Breast epithelium (tissue), 4 donors: ENCODE measurements at regions of chr3 and their contacts with region 1.

Region 1: DNA sequence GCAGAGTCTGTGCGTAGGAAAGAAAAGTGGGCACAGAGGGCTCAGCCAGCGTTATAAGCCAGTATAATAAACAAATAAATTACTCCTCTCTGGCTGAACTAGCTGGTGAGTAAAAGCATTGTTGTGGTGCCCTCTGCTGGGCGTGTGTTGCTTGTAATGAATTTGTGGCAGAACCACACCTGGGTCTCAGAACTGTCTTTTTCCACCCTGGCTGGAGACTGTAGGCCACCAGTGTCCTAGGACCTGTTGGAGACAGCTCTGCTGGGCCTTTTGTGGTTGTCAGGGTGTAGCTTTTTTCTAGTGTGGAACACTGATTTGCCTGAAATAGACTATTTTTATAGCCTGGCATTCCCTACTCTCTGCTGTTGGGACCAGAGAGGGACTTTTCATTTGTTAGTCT is 130.5 kb upstream of the EIF1B start:
- DNase-seq: peak; percentile 51 to 81
- H3K4me3 ChIP-seq: no peak overlapping the region
- H3K27ac ChIP-seq: no peak overlapping the region
- H3K4me1 ChIP-seq: no peaks in the 10 kb centered on the region
- H3K27me3 ChIP-seq: no peaks in the 10 kb centered on the region
- CTCF ChIP-seq: peak; percentile 28 to 74 (median 57)
- POLR2A ChIP-seq: no peak

Region 2: DNA sequence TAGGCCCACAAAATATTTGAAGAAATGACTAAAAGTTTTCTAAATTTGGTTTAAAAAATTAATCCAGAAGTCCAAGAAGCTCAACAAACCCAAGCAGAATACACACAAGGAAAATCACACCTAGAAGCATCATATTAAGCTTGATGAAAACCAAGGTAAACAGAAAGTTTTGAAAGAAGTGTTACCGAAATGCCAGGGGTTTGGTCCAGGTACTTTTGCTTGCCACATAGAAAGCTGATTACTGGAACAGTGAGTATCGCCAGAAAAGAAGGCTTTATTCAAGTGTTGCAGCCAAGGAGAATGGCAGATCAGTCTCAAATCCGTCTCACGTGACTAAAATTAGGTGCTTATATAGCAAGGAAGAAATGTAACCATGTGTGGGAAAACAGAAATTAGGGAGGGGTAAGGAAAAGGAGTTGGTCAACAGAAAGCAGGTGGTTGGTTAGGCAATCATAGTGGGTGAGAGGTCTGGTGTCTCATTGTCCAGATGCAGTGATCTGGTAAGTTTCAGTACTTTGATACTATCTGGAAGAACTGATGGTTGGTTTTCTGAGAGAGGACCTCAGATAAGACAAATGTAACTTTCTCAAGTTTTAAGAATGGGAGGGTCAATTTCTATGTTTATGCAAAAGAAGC is 466.5 kb before region 1 on chr3:
- intact Hi-C with region 1: loop called (anchors 5 kb)
- DNase-seq: no peak
- H3K4me3 ChIP-seq: no peak overlapping the region
- H3K27ac ChIP-seq: no peak overlapping the region
- H3K4me1 ChIP-seq: no peaks in the 10 kb centered on the region
- H3K27me3 ChIP-seq: no peaks in the 10 kb centered on the region
- CTCF ChIP-seq: no peak
- POLR2A ChIP-seq: no peak